ENCODE measurements at regions of chr21 and their contacts with region 1.

Region 1: GRCh38 chr21:33127154-33127893 is 57.4 kb downstream of the OLIG1 start:
- DNase-seq: peak; percentile 21 to 60 (median 43)
- ATAC-seq: peak; percentile 87
- H3K4me3 ChIP-seq: peak overlapping the region; percentile 60
- H3K4me3 Mint-ChIP-seq: peak overlapping the region; percentile 52 to 86 (median 78)
- H3K27ac ChIP-seq: no peak overlapping the region
- H3K27ac Mint-ChIP-seq: peak overlapping the region in 5 of 9 donors; percentile 26 to 60 (median 50)
- H3K4me1 ChIP-seq: no peaks in the 10 kb centered on the region
- H3K4me1 Mint-ChIP-seq: peaks cover 0 to 13% (median 6%) of the 10 kb centered on the region in 7 donors
- H3K27me3 ChIP-seq: no peaks in the 10 kb centered on the region
- H3K27me3 Mint-ChIP-seq: peaks cover 10 to 31% (median 27%) of the 10 kb centered on the region in 5 donors

Region 2: GRCh38 chr21:32653311-32653901 is 473.9 kb before region 1 on chr21:
- CTCF ChIA-PET with region 1: interaction called, 3 read pairs
- POLR2A ChIA-PET with region 1: no interaction called
- intact Hi-C with region 1: loop called in 1 of 2 experiments (anchors 2 kb)
- DNase-seq: peak in 7 of 9 donors; percentile 8 to 40 (median 28)
- ATAC-seq: peak; percentile 64
- H3K4me3 ChIP-seq: no peak overlapping the region
- H3K4me3 Mint-ChIP-seq: no peak overlapping the region
- H3K27ac ChIP-seq: no peak overlapping the region
- H3K27ac Mint-ChIP-seq: no peak overlapping the region
- H3K4me1 ChIP-seq: no peaks in the 10 kb centered on the region
- H3K4me1 Mint-ChIP-seq: peaks cover 0 to 12% (median 0%) of the 10 kb centered on the region in 7 donors
- H3K27me3 ChIP-seq: no peaks in the 10 kb centered on the region
- H3K27me3 Mint-ChIP-seq: no peaks in the 10 kb centered on the region

Region 3: DNA sequence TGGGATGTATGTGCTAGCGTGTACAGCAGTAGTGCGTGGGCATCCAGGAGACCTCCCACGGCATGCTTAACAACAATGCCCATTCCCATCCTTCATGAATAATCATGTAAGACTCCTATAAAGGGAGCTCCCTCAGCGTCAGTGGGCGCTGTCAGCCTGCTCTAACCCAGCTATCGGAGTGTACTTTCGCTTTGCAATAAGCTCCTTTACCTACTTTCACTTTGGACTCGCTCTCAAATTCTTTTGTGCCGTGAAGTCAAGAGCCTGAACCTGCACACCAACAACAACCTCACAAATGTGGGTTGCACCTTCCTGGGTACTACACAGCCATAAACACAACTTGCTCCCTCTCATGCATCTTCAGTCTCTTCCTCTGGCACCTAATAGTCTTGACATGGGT is 241.0 kb before region 1 on chr21:
- CTCF ChIA-PET with region 1: interaction called, 4 read pairs
- POLR2A ChIA-PET with region 1: no interaction called
- intact Hi-C with region 1: loop called in 1 of 2 experiments (anchors 1 kb)
- DNase-seq: peak in 6 of 9 donors; percentile 4 to 47 (median 28)
- ATAC-seq: peak; percentile 72
- H3K4me3 ChIP-seq: peak overlapping the region; percentile 48
- H3K4me3 Mint-ChIP-seq: peak overlapping the region; percentile 38 to 87 (median 77)
- H3K27ac ChIP-seq: peak overlapping the region; percentile 42
- H3K27ac Mint-ChIP-seq: peak overlapping the region; percentile 65 to 94 (median 80)
- H3K4me1 ChIP-seq: peaks cover 0 to 6% of the 10 kb centered on the region in 2 donors
- H3K4me1 Mint-ChIP-seq: peaks cover 0 to 17% (median 15%) of the 10 kb centered on the region in 7 donors
- H3K27me3 ChIP-seq: no peaks in the 10 kb centered on the region
- H3K27me3 Mint-ChIP-seq: peaks cover 0 to 23% (median 6%) of the 10 kb centered on the region in 5 donors

Region 4: GRCh38 chr21:32940079-32941014 is 187.0 kb before region 1 on chr21:
- CTCF ChIA-PET with region 1: interaction called, 7 read pairs
- POLR2A ChIA-PET with region 1: no interaction called
- intact Hi-C with region 1: loop called (anchors 1 to 2 kb)
- DNase-seq: peak in 8 of 9 donors; percentile 23 to 53 (median 40)
- ATAC-seq: peak; percentile 68
- H3K4me3 ChIP-seq: no peak overlapping the region
- H3K4me3 Mint-ChIP-seq: peak overlapping the region in 2 of 10 donors; percentile 28 to 45
- H3K27ac ChIP-seq: no peak overlapping the region
- H3K27ac Mint-ChIP-seq: no peak overlapping the region
- H3K4me1 ChIP-seq: no peaks in the 10 kb centered on the region
- H3K4me1 Mint-ChIP-seq: peaks cover 0 to 9% (median 6%) of the 10 kb centered on the region in 7 donors
- H3K27me3 ChIP-seq: no peaks in the 10 kb centered on the region
- H3K27me3 Mint-ChIP-seq: peaks cover 0 to 14% (median 0%) of the 10 kb centered on the region in 5 donors

Region 5: GRCh38 chr21:33025489-33026442 is 101.6 kb before region 1 on chr21 and contains the start of gene OLIG2:
- CTCF ChIA-PET with region 1: no interaction called
- POLR2A ChIA-PET with region 1: no interaction called
- intact Hi-C with region 1: loop called in 1 of 2 experiments (anchors 10 kb)
- DNase-seq: no peak
- ATAC-seq: no peak
- H3K4me3 ChIP-seq: no peak within 1 kb of the TSS
- H3K4me3 Mint-ChIP-seq: peak within 1 kb of the TSS; percentile 35 to 76 (median 61)
- H3K27ac ChIP-seq: no peak within 1 kb of the TSS
- H3K27ac Mint-ChIP-seq: peak within 1 kb of the TSS in 2 of 9 donors; percentile 28 to 84
- H3K4me1 ChIP-seq: peaks cover 12 to 48% of the 10 kb centered on the region in 2 donors
- H3K4me1 Mint-ChIP-seq: peaks cover 24 to 70% (median 54%) of the 10 kb centered on the region in 7 donors
- H3K27me3 ChIP-seq: peaks cover 24 to 50% of the 10 kb centered on the region in 2 donors
- H3K27me3 Mint-ChIP-seq: peaks cover 67 to 85% (median 80%) of the 10 kb centered on the region in 5 donors
- total RNA-seq, gene OLIG2: not detected

Region 6: DNA sequence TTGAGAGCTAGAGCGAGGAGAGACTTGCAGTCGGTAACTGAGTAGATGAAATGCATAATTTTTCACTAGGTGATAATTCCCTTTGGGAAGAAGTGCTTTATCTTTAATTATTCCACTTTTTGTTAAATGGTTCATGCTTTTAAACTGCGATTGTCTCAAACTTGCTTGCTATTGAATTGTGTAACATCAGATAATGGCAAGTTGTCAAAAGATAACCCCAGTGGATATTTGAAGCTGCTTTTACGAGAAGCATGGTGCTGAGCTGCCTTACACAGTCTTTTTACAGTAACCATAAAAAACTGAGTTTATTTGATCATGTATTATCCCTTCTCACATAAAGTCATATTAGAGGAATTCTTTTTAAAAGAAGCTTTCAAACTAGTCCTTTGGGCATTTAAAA is 322.3 kb after region 1 on chr21:
- CTCF ChIA-PET with region 1: interaction called, 3 read pairs
- POLR2A ChIA-PET with region 1: no interaction called
- intact Hi-C with region 1: loop called (anchors 5 kb)
- DNase-seq: no peak
- ATAC-seq: no peak
- H3K4me3 ChIP-seq: no peak overlapping the region
- H3K4me3 Mint-ChIP-seq: no peak overlapping the region
- H3K27ac ChIP-seq: no peak overlapping the region
- H3K27ac Mint-ChIP-seq: peak overlapping the region in 4 of 9 donors; percentile 51 to 81 (median 60)
- H3K4me1 ChIP-seq: no peaks in the 10 kb centered on the region
- H3K4me1 Mint-ChIP-seq: peaks cover 0 to 5% (median 4%) of the 10 kb centered on the region in 7 donors
- H3K27me3 ChIP-seq: no peaks in the 10 kb centered on the region
- H3K27me3 Mint-ChIP-seq: no peaks in the 10 kb centered on the region